ENCODE measurements at regions of chr4 and their contacts with region 1.

Region 1: DNA sequence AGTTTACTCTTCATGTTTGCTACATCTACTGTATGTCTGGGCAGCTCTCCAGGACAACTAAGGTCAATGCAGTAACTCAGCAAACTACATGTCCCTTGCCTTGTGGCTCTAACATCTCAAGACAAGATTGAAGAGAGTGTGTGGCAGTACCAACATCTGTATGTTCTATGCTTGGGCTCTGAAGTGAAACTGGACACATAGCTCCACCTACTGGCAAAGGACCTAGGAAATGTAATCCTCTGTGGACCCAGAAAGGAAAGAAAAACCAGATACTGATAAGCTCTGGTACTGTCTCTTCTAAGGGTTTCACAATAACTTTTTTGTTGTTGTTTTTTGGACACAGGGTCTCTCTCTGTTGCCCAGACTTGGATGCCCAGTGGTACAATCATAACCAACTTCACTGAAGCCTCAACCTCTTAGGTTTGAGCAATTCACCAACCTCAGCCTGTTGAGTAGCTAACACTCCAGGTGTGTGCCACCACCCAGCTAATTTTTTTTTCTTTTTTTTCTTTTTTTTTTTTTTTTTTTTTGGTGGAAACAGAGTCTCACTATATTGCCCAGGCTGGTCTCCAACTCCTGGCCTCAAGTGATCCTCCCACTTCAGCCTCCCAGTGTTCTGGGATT is 64.1 kb downstream of the QDPR start:
- DNase-seq: peak; percentile 44 to 77 (median 62)
- H3K4me3 ChIP-seq: no peak overlapping the region
- H3K27ac ChIP-seq: no peak overlapping the region
- H3K4me1 ChIP-seq: no peaks in the 10 kb centered on the region
- H3K27me3 ChIP-seq: no peaks in the 10 kb centered on the region
- CTCF ChIP-seq: peak; percentile 43 to 73 (median 67)
- POLR2A ChIP-seq: no peak

Region 2: DNA sequence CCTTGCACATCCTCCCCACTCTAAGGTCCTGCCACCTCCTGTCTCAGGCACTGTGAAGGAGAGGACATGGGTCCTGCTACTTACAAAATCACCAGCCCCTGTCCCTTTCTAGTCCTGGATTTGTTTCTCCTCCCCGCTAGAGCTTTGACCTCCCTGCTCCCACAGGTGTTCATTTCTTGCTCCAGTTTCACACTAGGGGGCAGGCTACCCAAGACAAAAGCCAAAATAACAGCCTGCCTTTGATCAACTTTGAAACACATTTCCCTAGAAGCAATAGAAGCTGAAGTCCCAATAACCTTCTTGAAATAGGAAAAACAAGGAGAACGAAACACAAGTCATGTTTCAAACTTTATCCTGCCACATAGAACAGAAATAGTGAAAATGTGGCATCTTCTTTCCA is 100.3 kb before region 1 on chr4:
- intact Hi-C with region 1: loop called (anchors 10 kb)
- DNase-seq: peak in 5 of 7 donors; percentile 21 to 55 (median 35)
- H3K4me3 ChIP-seq: no peak overlapping the region
- H3K27ac ChIP-seq: no peak overlapping the region
- H3K4me1 ChIP-seq: no peaks in the 10 kb centered on the region
- H3K27me3 ChIP-seq: no peaks in the 10 kb centered on the region
- CTCF ChIP-seq: peak; percentile 31 to 60 (median 54)
- POLR2A ChIP-seq: no peak